HEK293 (cell line): ENCODE measurements at regions of chr19 and their contacts with region 1.

Region 1: DNA sequence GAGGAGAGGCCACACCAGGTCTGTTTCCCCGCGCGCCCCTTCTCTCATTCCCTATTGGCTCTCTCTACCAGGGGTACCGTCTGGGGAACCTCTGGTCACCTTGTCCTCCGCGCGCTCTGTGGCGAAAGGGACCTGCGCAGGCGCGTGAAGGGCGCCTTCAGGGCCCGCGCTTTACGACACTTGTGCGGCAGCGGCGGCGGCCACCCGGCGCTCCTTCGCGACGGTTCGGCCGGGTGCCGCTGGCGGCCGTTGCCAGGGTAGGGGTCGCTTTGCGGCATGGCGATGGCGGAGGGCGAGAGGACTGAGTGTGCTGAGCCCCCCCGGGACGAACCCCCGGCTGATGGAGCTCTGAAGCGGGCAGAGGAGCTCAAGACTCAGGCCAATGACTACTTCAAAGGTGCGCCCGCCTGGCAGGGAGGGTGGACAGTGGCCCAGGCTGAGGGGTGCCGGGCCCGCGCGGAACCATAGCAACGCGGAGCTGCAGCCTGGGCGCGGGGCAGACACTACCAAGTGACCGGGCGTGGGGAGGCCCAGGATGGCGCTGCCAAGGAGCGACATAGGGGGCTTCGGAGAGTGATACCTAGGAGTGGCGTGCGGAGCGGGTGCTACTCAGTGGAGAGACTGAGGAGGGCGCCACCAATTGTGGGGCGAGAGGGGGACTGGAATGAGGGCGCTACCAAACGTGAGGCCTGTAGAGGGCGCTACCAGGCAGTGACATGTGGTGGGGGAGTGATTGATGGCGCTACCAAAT is at the start of gene PPP5C:
- H3K4me3 ChIP-seq: peak within 1 kb of the TSS; percentile 98
- H3K27ac ChIP-seq: peak within 1 kb of the TSS; percentile 93
- H3K4me1 ChIP-seq: peaks cover 19% of the 10 kb centered on the region
- CTCF ChIP-seq: peak; percentile 100

Region 2: DNA sequence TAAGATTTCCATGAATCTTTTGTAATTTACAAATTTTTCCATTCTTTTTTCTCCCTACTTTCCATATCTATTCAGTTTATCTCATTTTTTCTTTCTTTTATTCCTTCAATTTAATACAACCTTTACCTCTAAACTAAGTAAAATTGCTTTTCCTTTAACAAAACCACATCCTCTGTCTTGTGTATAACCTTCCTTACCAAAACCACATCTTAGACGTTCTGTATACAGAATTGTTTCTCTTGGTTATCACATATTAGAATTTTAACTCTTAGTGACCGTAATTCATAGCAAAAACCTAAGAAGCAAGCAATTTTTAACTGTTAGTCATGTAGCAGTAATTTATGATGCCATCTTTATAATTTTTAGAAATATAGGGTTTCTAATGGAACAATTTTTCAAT is 14.9 kb after region 1 on chr19:
- CTCF ChIA-PET with region 1: interaction called, 26 read pairs
- POLR2A ChIA-PET with region 1: interaction called, 4 read pairs
- H3K4me3 ChIP-seq: no peak overlapping the region
- H3K27ac ChIP-seq: no peak overlapping the region
- H3K4me1 ChIP-seq: 0 out of 2 replicates have a peak, but pooled peaks cover 3% of the 10 kb centered on the region
- CTCF ChIP-seq: no peak

Region 3: GRCh38 chr19:46368116-46368515 is 21.1 kb after region 1 on chr19:
- CTCF ChIA-PET with region 1: interaction called, 19 read pairs
- POLR2A ChIA-PET with region 1: no interaction called
- H3K4me3 ChIP-seq: no peak overlapping the region
- H3K27ac ChIP-seq: no peak overlapping the region
- H3K4me1 ChIP-seq: peaks cover 8% of the 10 kb centered on the region
- CTCF ChIP-seq: no peak